Psoas muscle (tissue), 8 donors: ENCODE measurements at regions of chr17 and their contacts with region 1.

Region 1: DNA sequence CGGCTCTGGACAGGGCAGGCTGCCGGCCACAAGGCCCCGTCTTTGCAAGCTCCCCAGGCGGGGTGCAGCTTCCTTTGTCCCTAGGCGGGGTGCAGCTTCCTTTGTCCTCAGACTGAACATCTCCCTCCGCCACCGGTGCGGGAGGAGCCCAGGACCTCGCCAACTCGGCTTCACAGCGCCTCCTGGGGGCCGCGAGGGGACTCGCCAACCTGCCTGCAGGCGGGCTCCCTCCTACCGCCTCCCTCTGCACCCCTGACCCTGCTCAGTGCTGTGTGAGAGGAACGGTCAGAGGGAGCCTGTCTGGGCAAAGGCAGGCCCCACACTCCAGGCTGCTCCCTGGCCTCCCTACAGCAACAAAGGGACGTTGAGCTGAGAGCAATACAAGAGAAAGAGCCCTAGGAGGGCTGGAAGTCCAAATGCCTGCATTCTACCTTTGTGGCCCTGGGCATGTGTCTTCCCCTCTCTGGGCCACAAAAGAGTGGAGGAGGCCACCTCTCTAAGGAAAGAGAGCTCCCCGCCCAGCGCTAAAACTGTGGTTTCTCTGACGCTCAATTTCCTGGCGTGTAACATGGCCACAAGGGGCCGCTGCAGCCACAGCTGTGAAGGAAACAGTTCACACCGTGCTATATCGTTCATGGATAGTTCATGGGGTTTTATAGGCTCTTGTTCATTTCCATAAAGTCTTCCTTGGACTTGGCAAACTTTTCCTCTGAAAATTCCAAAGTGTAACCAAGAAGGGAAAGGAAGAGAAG is 20.9 kb upstream of the KRT19 start:
- DNase-seq: peak; percentile 80 to 89
- ATAC-seq: peak; percentile 83 to 94 (median 88)
- H3K4me3 ChIP-seq: peak overlapping the region; percentile 34
- H3K27ac ChIP-seq: no peak overlapping the region
- H3K4me1 ChIP-seq: peaks cover 6% of the 10 kb centered on the region
- H3K27me3 ChIP-seq: peaks cover 0 to 10% (median 2%) of the 10 kb centered on the region in 3 donors
- CTCF ChIP-seq: peak; percentile 90

Region 2: GRCh38 chr17:40909351-40909750 is 639.7 kb before region 1 on chr17:
- intact Hi-C with region 1: loop called (anchors 2 to 10 kb)
- DNase-seq: peak; percentile 56 to 85
- ATAC-seq: peak; percentile 96 to 98 (median 96)
- H3K4me3 ChIP-seq: no peak overlapping the region
- H3K27ac ChIP-seq: no peak overlapping the region
- H3K4me1 ChIP-seq: peaks cover 17% of the 10 kb centered on the region
- H3K27me3 ChIP-seq: peaks cover 0 to 22% (median 2%) of the 10 kb centered on the region in 3 donors
- CTCF ChIP-seq: peak; percentile 80

Region 3: GRCh38 chr17:41602524-41602923 is 53.5 kb after region 1 on chr17:
- intact Hi-C with region 1: no loop called
- DNase-seq: no peak
- ATAC-seq: no peak
- H3K4me3 ChIP-seq: no peak overlapping the region
- H3K27ac ChIP-seq: no peak overlapping the region
- H3K4me1 ChIP-seq: no peaks in the 10 kb centered on the region
- H3K27me3 ChIP-seq: peaks cover 0 to 4% (median 2%) of the 10 kb centered on the region in 3 donors
- CTCF ChIP-seq: no peak